ENCODE measurements at regions of chr9 and their contacts with region 1.

Region 1: DNA sequence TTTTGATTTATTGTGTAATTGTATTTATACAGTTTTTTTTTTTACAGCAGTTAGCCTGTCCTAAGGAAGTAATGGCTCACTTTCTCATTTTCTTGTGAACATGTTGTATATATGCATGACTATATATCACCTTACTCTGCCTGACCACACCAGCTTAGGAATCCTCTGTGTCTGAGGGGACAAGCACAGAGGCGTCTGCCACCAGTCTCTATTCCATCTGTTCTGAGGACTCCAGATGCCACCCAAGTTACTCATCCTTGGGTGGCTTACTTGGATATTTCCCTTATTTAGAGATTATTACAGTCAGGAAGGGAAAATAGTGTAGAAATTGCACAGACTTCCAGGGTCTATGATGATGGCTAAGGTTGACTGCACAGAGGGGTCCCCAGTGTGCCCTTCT is 256.3 kb upstream of the C9orf72 start:
- DNase-seq: no peak
- ATAC-seq: no peak

Region 2: GRCh38 chr9:29118555-29118954 is 1288.9 kb after region 1 on chr9:
- intact Hi-C with region 1: loop called (anchors 5 kb)
- DNase-seq: no peak
- ATAC-seq: no peak

Measured in sciatic nerve (tissue), 2 donors.